Activated CD4-positive, alpha-beta memory T cell treated with anti-CD3 and anti-CD28 coated beads for 36 hours (primary cell): ENCODE measurements at regions of chr2 and their contacts with region 1.

Region 1: GRCh38 chr2:160324161-160324800 is 124.2 kb upstream of the ITGB6 start:
- DNase-seq: peak; percentile 62
- H3K4me3 Mint-ChIP-seq: no peak overlapping the region
- H3K27ac Mint-ChIP-seq: no peak overlapping the region
- H3K4me1 Mint-ChIP-seq: peaks cover 80% of the 10 kb centered on the region
- H3K27me3 Mint-ChIP-seq: no peaks in the 10 kb centered on the region

Region 2: DNA sequence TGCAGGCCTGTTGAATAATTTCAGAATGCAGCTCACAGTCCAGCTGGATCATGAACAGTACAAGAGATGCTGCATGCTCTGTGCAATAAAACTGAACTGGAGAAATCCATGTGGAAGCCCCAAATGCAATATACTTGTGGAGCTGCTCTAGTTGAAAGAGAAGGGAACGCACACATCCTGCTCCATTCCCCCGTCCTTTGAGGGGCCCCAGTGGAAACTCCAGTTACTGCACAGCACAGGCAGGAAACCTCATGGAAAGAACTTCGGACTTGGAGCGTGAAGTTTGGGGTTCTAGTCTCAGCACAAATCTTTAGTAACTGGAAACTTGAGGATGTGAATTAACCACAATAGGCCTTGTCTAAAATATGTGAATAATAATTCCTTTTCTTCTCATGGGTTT is 335.0 kb before region 1 on chr2:
- CTCF ChIA-PET with region 1: no interaction called
- POLR2A ChIA-PET with region 1: no interaction called
- intact Hi-C with region 1: no loop called
- DNase-seq: no peak
- H3K4me3 Mint-ChIP-seq: no peak overlapping the region
- H3K27ac Mint-ChIP-seq: no peak overlapping the region
- H3K4me1 Mint-ChIP-seq: no peaks in the 10 kb centered on the region
- H3K27me3 Mint-ChIP-seq: peaks cover 17% of the 10 kb centered on the region

Region 3: DNA sequence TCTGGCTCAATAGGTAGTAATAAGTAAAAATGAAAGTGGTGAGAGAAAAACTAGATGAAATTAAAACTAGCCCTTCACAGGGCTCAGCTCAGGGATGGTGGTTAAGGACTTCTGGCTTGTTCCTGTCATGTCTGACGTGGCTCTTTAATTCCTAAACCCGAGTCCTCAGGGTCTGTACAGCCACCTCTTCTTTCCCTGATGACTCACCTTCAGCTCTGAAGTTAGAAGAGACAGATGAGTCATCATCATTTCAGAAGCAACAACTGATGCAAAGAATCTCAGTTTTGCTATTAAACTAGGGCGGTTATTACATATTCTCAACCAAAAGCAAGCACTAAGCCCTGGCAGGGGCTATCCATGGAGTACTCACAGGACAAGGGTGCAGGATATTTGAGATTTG is 100.2 kb before region 1 on chr2:
- CTCF ChIA-PET with region 1: interaction called, 3 read pairs
- POLR2A ChIA-PET with region 1: interaction called, 3 read pairs
- intact Hi-C with region 1: loop called (anchors 1 kb)
- DNase-seq: peak; percentile 54
- H3K4me3 Mint-ChIP-seq: peak overlapping the region; percentile 45
- H3K27ac Mint-ChIP-seq: peak overlapping the region; percentile 73
- H3K4me1 Mint-ChIP-seq: peaks cover 64% of the 10 kb centered on the region
- H3K27me3 Mint-ChIP-seq: peaks cover 16% of the 10 kb centered on the region

Region 4: GRCh38 chr2:160294339-160294803 is 29.9 kb before region 1 on chr2:
- CTCF ChIA-PET with region 1: interaction called, 4 read pairs
- POLR2A ChIA-PET with region 1: interaction called, 3 read pairs
- intact Hi-C with region 1: loop called (anchors 1 kb)
- DNase-seq: peak; percentile 68
- H3K4me3 Mint-ChIP-seq: no peak overlapping the region
- H3K27ac Mint-ChIP-seq: peak overlapping the region; percentile 18
- H3K4me1 Mint-ChIP-seq: peaks cover 76% of the 10 kb centered on the region
- H3K27me3 Mint-ChIP-seq: no peaks in the 10 kb centered on the region

Region 5: DNA sequence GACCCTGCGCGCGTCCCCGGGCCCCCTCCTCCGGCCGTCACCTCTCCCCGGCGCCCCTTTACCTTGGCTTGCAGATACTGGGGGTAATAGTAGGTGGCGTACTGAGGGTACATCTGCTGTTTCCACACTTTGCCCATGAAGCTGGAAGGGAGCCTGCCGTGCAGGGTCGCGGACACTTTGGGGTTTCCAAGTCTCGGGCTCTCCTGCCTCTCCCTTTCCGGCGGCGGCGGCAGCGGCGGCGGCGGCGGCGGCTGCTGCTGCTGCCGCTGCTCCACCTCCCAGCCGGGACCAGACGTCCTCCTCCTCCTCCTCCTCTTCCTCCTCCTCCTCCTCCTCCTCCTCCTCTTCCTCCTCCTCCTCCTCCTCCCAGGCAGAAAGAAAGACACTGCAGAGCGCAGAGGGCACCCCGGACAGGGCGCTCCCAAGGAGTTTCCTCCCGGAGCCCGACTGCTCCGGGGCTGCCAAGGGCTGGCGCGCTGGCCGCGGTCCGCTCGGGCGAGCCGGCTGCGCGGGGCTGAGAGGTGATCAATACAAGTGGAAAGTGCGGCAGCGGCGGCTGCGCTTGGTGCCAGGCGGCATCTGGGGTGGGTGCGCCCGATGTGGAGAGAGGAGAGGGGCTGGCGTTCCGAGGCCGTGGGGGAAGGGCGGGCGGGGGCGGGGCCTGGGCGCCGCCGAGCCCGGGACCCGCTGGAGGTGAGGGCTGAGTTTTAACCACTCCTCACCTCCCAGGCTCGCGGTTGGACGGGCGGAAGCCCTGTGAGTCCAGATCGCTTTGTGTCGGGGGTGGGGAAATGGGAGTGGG is 169.1 kb after region 1 on chr2 and contains the start of gene RBMS1:
- CTCF ChIA-PET with region 1: interaction called, 4 read pairs
- POLR2A ChIA-PET with region 1: no interaction called
- intact Hi-C with region 1: loop called (anchors 2 kb)
- DNase-seq: peak; percentile 59
- H3K4me3 Mint-ChIP-seq: peak within 1 kb of the TSS; percentile 95
- H3K27ac Mint-ChIP-seq: peak within 1 kb of the TSS; percentile 93
- H3K4me1 Mint-ChIP-seq: peaks cover 36% of the 10 kb centered on the region
- H3K27me3 Mint-ChIP-seq: no peaks in the 10 kb centered on the region
- total RNA-seq, gene RBMS1: 37.9 to 40.0 TPM

Region 6: DNA sequence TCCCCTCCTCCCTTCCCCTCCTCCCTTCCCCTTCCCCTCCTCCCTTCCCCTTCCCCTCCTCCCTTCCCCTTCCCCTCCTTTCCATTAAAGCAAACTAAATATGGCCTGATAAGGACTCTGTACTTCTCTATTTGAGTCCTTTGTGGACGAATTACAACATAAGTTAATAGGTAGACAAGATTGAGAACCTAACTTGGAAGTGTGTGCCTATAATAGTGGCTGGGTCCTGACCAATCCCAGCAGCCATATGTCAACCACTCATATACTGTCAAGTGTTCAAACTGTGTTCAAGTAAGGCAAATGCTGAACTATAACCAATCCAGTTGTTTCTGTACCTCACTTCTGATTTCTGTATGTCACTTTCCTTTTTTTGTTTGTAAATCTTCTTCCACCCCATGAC is 266.4 kb after region 1 on chr2:
- CTCF ChIA-PET with region 1: no interaction called
- POLR2A ChIA-PET with region 1: no interaction called
- intact Hi-C with region 1: no loop called
- DNase-seq: no peak
- H3K4me3 Mint-ChIP-seq: no peak overlapping the region
- H3K27ac Mint-ChIP-seq: no peak overlapping the region
- H3K4me1 Mint-ChIP-seq: peaks cover 3% of the 10 kb centered on the region
- H3K27me3 Mint-ChIP-seq: no peaks in the 10 kb centered on the region

Region 7: GRCh38 chr2:160970052-160970965 is 646.0 kb after region 1 on chr2:
- CTCF ChIA-PET with region 1: interaction called, 20 read pairs
- POLR2A ChIA-PET with region 1: no interaction called
- intact Hi-C with region 1: loop called (anchors 2 kb)
- DNase-seq: no peak
- H3K4me3 Mint-ChIP-seq: no peak overlapping the region
- H3K27ac Mint-ChIP-seq: no peak overlapping the region
- H3K4me1 Mint-ChIP-seq: peaks cover 2% of the 10 kb centered on the region
- H3K27me3 Mint-ChIP-seq: no peaks in the 10 kb centered on the region

Region 8: GRCh38 chr2:161160226-161161069 is 836.2 kb after region 1 on chr2 and contains the start of gene TANK:
- CTCF ChIA-PET with region 1: no interaction called
- POLR2A ChIA-PET with region 1: no interaction called
- intact Hi-C with region 1: loop called (anchors 10 kb)
- DNase-seq: peak; percentile 96
- H3K4me3 Mint-ChIP-seq: peak within 1 kb of the TSS; percentile 96
- H3K27ac Mint-ChIP-seq: peak within 1 kb of the TSS; percentile 98
- H3K4me1 Mint-ChIP-seq: peaks cover 55% of the 10 kb centered on the region
- H3K27me3 Mint-ChIP-seq: no peaks in the 10 kb centered on the region
- total RNA-seq, gene TANK: 71.4 to 74.1 TPM